Right cardiac atrium (tissue), 5 donors: ENCODE measurements at regions of chrX and their contacts with region 1.

Region 1: GRCh38 chrX:108199691-108200090 is 108.1 kb downstream of the ATG4A start:
- DNase-seq: no peak
- ATAC-seq: peak in 1 of 2 donors; percentile 20
- H3K4me3 ChIP-seq: no peak overlapping the region
- H3K27ac ChIP-seq: no peak overlapping the region
- H3K4me1 ChIP-seq: no peaks in the 10 kb centered on the region
- H3K27me3 ChIP-seq: no peaks in the 10 kb centered on the region

Region 2: GRCh38 chrX:108426262-108426661 is 226.6 kb after region 1 on chrX:
- intact Hi-C with region 1: no loop called
- DNase-seq: no peak
- ATAC-seq: no peak
- H3K4me3 ChIP-seq: no peak overlapping the region
- H3K27ac ChIP-seq: no peak overlapping the region
- H3K4me1 ChIP-seq: no peaks in the 10 kb centered on the region
- H3K27me3 ChIP-seq: no peaks in the 10 kb centered on the region

Region 3: DNA sequence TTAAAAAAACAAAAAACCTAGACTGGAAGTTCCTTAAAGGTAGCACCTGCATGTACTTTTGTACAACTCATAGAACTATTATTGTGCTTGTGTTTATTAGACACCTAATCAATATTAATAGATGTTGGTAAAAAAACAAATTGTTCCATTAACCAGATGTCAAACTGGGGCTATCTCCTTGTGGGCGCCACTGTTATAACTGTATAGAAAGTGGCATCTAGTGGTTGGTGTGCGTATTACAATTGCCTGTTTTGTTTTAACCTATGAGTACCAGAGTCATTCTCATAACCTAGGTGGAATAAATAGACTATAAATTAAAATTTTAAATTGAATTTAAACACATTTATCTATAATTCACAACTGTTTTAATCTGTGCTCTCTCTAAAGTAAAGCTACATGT is 337.3 kb after region 1 on chrX:
- intact Hi-C with region 1: loop called in 1 of 4 experiments (anchors 2 kb)
- DNase-seq: no peak
- ATAC-seq: no peak
- H3K4me3 ChIP-seq: no peak overlapping the region
- H3K27ac ChIP-seq: no peak overlapping the region
- H3K4me1 ChIP-seq: no peaks in the 10 kb centered on the region
- H3K27me3 ChIP-seq: no peaks in the 10 kb centered on the region